ENCODE measurements at regions of chr20 and their contacts with region 1.

Region 1: GRCh38 chr20:50750145-50750671 is 18.8 kb downstream of the PARD6B start:
- DNase-seq: no peak
- H3K27ac ChIP-seq: no peak overlapping the region
- CTCF ChIP-seq: no peak

Region 2: GRCh38 chr20:50625986-50626677 is 124.1 kb before region 1 on chr20:
- CTCF ChIA-PET with region 1: interaction called, 11 read pairs
- POLR2A ChIA-PET with region 1: no interaction called
- DNase-seq: no peak
- H3K27ac ChIP-seq: peak overlapping the region; percentile 70
- CTCF ChIP-seq: no peak; the same call in 1 of the 2 replicates

Region 3: GRCh38 chr20:50663095-50663850 is 86.9 kb before region 1 on chr20:
- CTCF ChIA-PET with region 1: interaction called, 21 read pairs
- POLR2A ChIA-PET with region 1: no interaction called
- DNase-seq: peak; percentile 83
- H3K27ac ChIP-seq: no peak overlapping the region
- CTCF ChIP-seq: no peak; the same call in 1 of the 2 replicates

Region 4: DNA sequence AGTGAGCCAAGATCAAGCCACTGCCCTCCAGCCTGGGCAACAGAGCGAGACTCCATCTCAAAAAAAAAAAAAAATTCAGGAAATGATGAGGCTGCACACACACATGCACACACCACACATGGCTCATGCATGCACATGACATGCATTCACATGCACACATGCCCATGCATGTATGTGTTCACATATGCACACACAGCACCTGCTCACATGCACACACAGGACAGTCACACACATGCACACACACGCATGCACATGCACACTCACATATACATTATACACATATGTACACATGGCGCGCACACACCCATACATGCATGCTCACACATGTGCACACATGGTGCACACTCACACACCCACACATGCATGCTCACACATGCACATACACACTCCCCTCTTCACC is 81.4 kb before region 1 on chr20:
- CTCF ChIA-PET with region 1: interaction called, 21 read pairs
- POLR2A ChIA-PET with region 1: interaction called, 11 read pairs
- DNase-seq: no peak
- H3K27ac ChIP-seq: no peak overlapping the region
- CTCF ChIP-seq: no peak

Region 5: GRCh38 chr20:50735813-50736212 is 14.4 kb before region 1 on chr20:
- CTCF ChIA-PET with region 1: interaction called, 10 read pairs
- POLR2A ChIA-PET with region 1: no interaction called
- DNase-seq: peak; percentile 61
- H3K27ac ChIP-seq: no peak overlapping the region
- CTCF ChIP-seq: no peak

Region 6: GRCh38 chr20:51022803-51023630 is 272.8 kb after region 1 on chr20 and contains the start of gene KCNG1:
- CTCF ChIA-PET with region 1: no interaction called
- POLR2A ChIA-PET with region 1: no interaction called
- DNase-seq: peak; percentile 96
- H3K27ac ChIP-seq: no peak within 1 kb of the TSS
- CTCF ChIP-seq: no peak

Measured in RWPE1 (cell line).